Ovary (tissue), 10 donors: ENCODE measurements at regions of chr5 and their contacts with region 1.

Region 1: GRCh38 chr5:81058121-81058520 is 98.0 kb downstream of the RASGRF2 start:
- DNase-seq: no peak
- H3K4me3 ChIP-seq: no peak overlapping the region
- H3K27ac ChIP-seq: no peak overlapping the region
- H3K4me1 ChIP-seq: no peaks in the 10 kb centered on the region
- H3K27me3 ChIP-seq: no peaks in the 10 kb centered on the region
- CTCF ChIP-seq: no peak
- EP300 ChIP-seq: no peak
- POLR2A ChIP-seq: no peak

Region 2: DNA sequence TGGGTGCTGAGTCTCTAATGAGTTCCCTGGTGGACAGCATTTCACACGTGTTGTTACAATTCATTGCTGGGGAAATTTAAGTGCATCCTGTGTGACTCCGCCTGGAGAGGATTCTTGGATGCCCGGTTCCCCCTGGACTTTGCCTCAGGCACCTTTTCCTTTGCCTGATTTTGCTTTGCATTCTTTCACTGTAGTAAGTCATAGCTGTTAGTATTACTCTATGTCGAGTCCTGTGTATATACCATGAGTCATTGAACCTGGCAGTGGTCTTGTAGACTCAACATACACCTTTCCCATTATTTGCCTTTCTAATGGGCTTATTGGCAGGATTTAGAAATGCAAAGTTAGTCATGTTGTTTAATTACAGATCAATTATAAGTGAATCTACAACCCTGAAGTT is 321.4 kb before region 1 on chr5:
- intact Hi-C with region 1: no loop called
- DNase-seq: no peak
- H3K4me3 ChIP-seq: no peak overlapping the region
- H3K27ac ChIP-seq: no peak overlapping the region
- H3K4me1 ChIP-seq: no peaks in the 10 kb centered on the region
- H3K27me3 ChIP-seq: no peaks in the 10 kb centered on the region
- CTCF ChIP-seq: no peak
- EP300 ChIP-seq: no peak
- POLR2A ChIP-seq: no peak

Region 3: GRCh38 chr5:81097713-81098112 is 39.6 kb after region 1 on chr5:
- intact Hi-C with region 1: loop called in 1 of 4 experiments (anchors 1 kb)
- DNase-seq: no peak
- H3K4me3 ChIP-seq: no peak overlapping the region
- H3K27ac ChIP-seq: no peak overlapping the region
- H3K4me1 ChIP-seq: no peaks in the 10 kb centered on the region
- H3K27me3 ChIP-seq: no peaks in the 10 kb centered on the region
- CTCF ChIP-seq: no peak
- EP300 ChIP-seq: no peak
- POLR2A ChIP-seq: no peak

Region 4: GRCh38 chr5:81288021-81288433 is 229.9 kb after region 1 on chr5:
- intact Hi-C with region 1: no loop called
- DNase-seq: no peak
- H3K4me3 ChIP-seq: no peak overlapping the region
- H3K27ac ChIP-seq: no peak overlapping the region
- H3K4me1 ChIP-seq: no peaks in the 10 kb centered on the region
- H3K27me3 ChIP-seq: no peaks in the 10 kb centered on the region
- CTCF ChIP-seq: no peak
- EP300 ChIP-seq: no peak
- POLR2A ChIP-seq: no peak

Region 5: DNA sequence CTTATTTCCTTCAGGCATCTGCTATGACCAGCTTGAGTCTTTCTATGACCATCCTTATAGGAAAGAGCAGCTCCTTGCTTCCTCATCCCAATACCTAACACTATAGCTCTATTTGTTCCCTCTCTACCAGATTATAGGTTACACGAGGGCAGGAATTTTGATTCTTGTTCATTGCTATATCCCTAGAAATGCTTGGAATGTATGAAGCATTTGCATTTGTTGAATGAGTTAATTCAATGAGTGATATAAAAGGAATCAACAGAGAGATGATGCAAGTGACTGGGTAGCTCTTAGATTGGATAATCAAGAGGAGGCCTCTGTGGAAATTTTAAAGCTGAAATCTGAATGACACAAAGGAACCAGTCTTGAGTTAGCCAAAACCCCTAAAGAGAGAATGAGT is 257.2 kb after region 1 on chr5:
- intact Hi-C with region 1: no loop called
- DNase-seq: no peak
- H3K4me3 ChIP-seq: no peak overlapping the region
- H3K27ac ChIP-seq: no peak overlapping the region
- H3K4me1 ChIP-seq: no peaks in the 10 kb centered on the region
- H3K27me3 ChIP-seq: no peaks in the 10 kb centered on the region
- CTCF ChIP-seq: no peak
- EP300 ChIP-seq: no peak
- POLR2A ChIP-seq: no peak